ENCODE measurements at regions of chr6 and their contacts with region 1.

Region 1: GRCh38 chr6:116531675-116532570 is 13.6 kb downstream of the TRAPPC3L start:
- DNase-seq: peak; percentile 82
- ATAC-seq: peak; percentile 86
- H3K4me3 ChIP-seq: no peak overlapping the region
- H3K27ac ChIP-seq: no peak overlapping the region
- H3K4me1 ChIP-seq: peaks cover 13% of the 10 kb centered on the region
- H3K27me3 ChIP-seq: no peaks in the 10 kb centered on the region
- CTCF ChIP-seq: peak; percentile 78
- POLR2A ChIP-seq: no peak
- RAD21 ChIP-seq: peak; percentile 74

Region 2: DNA sequence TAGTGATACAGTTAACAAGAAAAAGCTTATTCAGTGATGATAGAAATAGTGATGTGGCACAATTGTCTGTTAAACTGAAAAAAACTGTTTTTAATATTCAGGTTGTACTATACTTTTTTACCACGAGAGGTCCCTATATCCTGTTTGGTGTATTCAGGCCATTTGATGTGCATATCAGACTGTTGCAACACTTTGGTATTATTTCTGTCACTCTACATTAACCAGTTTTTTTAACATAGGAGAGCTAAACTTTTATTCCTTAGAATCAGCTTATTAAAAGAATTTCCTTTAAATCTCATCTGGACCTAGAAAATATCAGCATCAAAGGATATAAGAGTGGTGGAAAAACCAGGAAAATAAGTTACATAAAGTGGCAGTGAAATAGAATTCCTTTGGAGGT is 314.9 kb before region 1 on chr6:
- CTCF ChIA-PET with region 1: no interaction called
- POLR2A ChIA-PET with region 1: no interaction called
- dilution Hi-C with region 1: no loop called
- in situ Hi-C with region 1: no loop called
- intact Hi-C with region 1: loop called (anchors 2 kb)
- DNase-seq: peak; percentile 52
- ATAC-seq: peak; percentile 67
- H3K4me3 ChIP-seq: no peak overlapping the region
- H3K27ac ChIP-seq: no peak overlapping the region
- H3K4me1 ChIP-seq: peaks cover 6% of the 10 kb centered on the region
- H3K27me3 ChIP-seq: no peaks in the 10 kb centered on the region
- CTCF ChIP-seq: peak; percentile 59
- POLR2A ChIP-seq: no peak
- RAD21 ChIP-seq: peak; percentile 54

Region 3: GRCh38 chr6:116287689-116288282 is 244.1 kb before region 1 on chr6:
- CTCF ChIA-PET with region 1: interaction called, 6 read pairs
- POLR2A ChIA-PET with region 1: no interaction called
- dilution Hi-C with region 1: no loop called
- in situ Hi-C with region 1: loop called (anchors 10 kb)
- intact Hi-C with region 1: loop called (anchors 1 kb)
- DNase-seq: peak; percentile 74
- ATAC-seq: peak; percentile 87
- H3K4me3 ChIP-seq: no peak overlapping the region
- H3K27ac ChIP-seq: no peak overlapping the region
- H3K4me1 ChIP-seq: no peaks in the 10 kb centered on the region; the same call in 1 of the 2 replicates
- H3K27me3 ChIP-seq: no peaks in the 10 kb centered on the region
- CTCF ChIP-seq: peak; percentile 88
- POLR2A ChIP-seq: no peak
- RAD21 ChIP-seq: peak; percentile 88

Region 4: GRCh38 chr6:116371120-116371917 is 160.6 kb before region 1 on chr6:
- CTCF ChIA-PET with region 1: no interaction called
- POLR2A ChIA-PET with region 1: no interaction called
- dilution Hi-C with region 1: no loop called
- in situ Hi-C with region 1: no loop called
- intact Hi-C with region 1: loop called (anchors 2 kb)
- DNase-seq: peak; percentile 94
- ATAC-seq: peak; percentile 78
- H3K4me3 ChIP-seq: peak overlapping the region; percentile 63
- H3K27ac ChIP-seq: peak overlapping the region; percentile 98
- H3K4me1 ChIP-seq: peaks cover 9% of the 10 kb centered on the region
- H3K27me3 ChIP-seq: no peaks in the 10 kb centered on the region
- CTCF ChIP-seq: no peak
- POLR2A ChIP-seq: peak; percentile 59; the same call in 1 of the 2 replicates
- RAD21 ChIP-seq: peak; percentile 28; the same call in 1 of the 2 replicates

Region 5: GRCh38 chr6:116511404-116512110 is 20.4 kb before region 1 on chr6 and contains the start of gene CALHM5:
- CTCF ChIA-PET with region 1: interaction called, 4 read pairs
- POLR2A ChIA-PET with region 1: no interaction called
- dilution Hi-C with region 1: no loop called
- in situ Hi-C with region 1: no loop called
- intact Hi-C with region 1: loop called (anchors 2 kb)
- DNase-seq: peak; percentile 94
- ATAC-seq: peak; percentile 86
- H3K4me3 ChIP-seq: peak within 1 kb of the TSS; percentile 51
- H3K27ac ChIP-seq: peak within 1 kb of the TSS; percentile 92
- H3K4me1 ChIP-seq: peaks cover 5% of the 10 kb centered on the region
- H3K27me3 ChIP-seq: no peaks in the 10 kb centered on the region
- CTCF ChIP-seq: peak; percentile 85
- POLR2A ChIP-seq: no peak; the same call in 1 of the 2 replicates
- RAD21 ChIP-seq: peak; percentile 50
- total RNA-seq, gene CALHM5: 10.6 and 10.8 TPM in 2 replicates

Region 6: DNA sequence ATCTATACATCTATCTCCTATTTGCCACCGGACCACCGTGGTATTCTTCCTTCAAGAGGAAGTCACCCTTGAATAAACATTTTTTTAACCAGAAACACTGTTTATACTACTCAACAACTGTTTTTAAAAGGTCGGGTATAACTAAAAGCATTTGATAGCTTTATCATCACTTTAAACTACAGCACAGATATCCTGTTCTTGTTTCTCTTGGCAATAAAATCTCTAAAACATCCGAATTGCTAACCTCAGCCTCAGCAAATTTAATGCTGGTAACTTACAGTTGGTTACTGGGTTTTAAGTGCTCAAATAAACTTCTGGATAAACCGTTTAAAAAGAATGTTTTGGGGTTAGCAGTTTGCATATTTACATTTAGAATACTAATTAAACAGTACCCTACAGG is 116.2 kb after region 1 on chr6:
- CTCF ChIA-PET with region 1: no interaction called
- POLR2A ChIA-PET with region 1: no interaction called
- dilution Hi-C with region 1: no loop called
- in situ Hi-C with region 1: no loop called
- intact Hi-C with region 1: loop called (anchors 1 kb)
- DNase-seq: peak; percentile 51
- ATAC-seq: peak; percentile 89
- H3K4me3 ChIP-seq: no peak overlapping the region
- H3K27ac ChIP-seq: no peak overlapping the region
- H3K4me1 ChIP-seq: peaks cover 2% of the 10 kb centered on the region
- H3K27me3 ChIP-seq: no peaks in the 10 kb centered on the region
- CTCF ChIP-seq: no peak
- POLR2A ChIP-seq: no peak
- RAD21 ChIP-seq: no peak

Region 7: DNA sequence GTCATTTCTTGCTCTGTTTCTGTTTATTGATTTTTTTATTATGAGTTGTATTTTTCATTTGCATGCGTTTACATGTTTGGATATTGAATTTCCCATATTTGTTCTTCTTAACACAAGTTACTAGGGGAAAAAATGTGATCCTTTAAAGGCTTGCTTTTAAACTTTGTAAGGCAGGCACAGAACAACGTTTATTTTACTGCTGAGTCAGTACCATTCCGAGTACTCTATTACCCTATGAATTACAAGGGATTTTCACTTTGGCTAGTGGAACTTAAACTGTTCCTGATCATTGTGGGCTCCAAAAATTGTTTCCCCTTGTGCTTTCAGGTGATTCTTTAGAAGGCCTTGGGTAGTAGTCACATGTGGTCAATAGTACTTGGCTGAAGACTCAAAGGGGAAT is 205.1 kb after region 1 on chr6:
- CTCF ChIA-PET with region 1: no interaction called
- POLR2A ChIA-PET with region 1: no interaction called
- dilution Hi-C with region 1: no loop called
- in situ Hi-C with region 1: no loop called
- intact Hi-C with region 1: no loop called
- DNase-seq: peak; percentile 2
- ATAC-seq: no peak; the same call in 1 of the 2 replicates
- H3K4me3 ChIP-seq: no peak overlapping the region
- H3K27ac ChIP-seq: no peak overlapping the region
- H3K4me1 ChIP-seq: no peaks in the 10 kb centered on the region
- H3K27me3 ChIP-seq: no peaks in the 10 kb centered on the region
- CTCF ChIP-seq: no peak
- POLR2A ChIP-seq: no peak
- RAD21 ChIP-seq: no peak

Measured in IMR-90 (cell line).